H1 (cell line): ENCODE measurements at regions of chr11 and their contacts with region 1.

Region 1: DNA sequence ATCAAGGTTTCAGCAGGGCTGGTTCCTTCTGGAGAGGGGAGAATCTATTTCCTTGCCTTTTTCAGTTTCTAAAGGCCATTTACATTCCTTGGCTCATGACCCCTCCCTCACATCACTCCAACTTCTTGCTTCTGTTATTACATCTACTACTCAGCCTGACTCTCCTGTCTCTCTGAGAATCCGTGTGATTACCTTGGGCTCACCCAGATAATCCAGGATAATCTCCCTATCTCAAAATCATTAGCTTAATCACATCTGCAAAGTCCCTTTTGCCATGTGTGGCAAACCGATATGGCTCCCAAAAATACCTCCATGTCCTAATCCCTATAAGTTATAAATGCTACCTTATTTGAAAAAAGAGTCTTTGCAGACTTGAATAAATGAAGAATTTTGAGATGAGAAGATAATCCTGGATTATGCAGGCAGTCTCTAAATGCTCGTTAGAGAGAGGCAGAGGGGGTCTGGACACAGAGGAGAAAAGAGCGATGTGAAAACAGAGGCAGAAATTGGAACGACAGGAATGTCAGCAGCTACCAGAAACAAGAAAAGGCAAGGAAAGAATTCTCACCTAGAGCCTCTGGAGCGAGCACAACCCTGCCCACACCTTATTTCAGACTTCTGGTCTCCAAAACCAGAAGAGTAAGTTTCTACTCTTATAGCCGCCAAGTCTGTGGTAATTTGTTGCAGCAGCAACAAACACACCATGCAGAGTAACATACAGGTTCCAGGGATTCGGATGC is 23.6 kb upstream of the ARHGAP32 start:
- DNase-seq: peak in 1 of 2 experiments; percentile 23
- H3K4me3 ChIP-seq: no peak overlapping the region
- H3K27ac ChIP-seq: no peak overlapping the region
- H3K4me1 ChIP-seq: peaks cover 7 to 29% (median 23%) of the 10 kb centered on the region in 4 experiments; a peak in 6 of 7 replicates
- H3K27me3 ChIP-seq: no peaks in the 10 kb centered on the region
- CTCF ChIP-seq: no peak
- EP300 ChIP-seq: no peak
- POLR2A ChIP-seq: no peak
- RAD21 ChIP-seq: no peak; a peak in 1 of 4 replicates

Region 2: GRCh38 chr11:129195682-129196081 is 20.0 kb before region 1 on chr11:
- CTCF ChIA-PET with region 1: no interaction called
- POLR2A ChIA-PET with region 1: no interaction called
- DNase-seq: no peak
- H3K4me3 ChIP-seq: no peak overlapping the region
- H3K27ac ChIP-seq: no peak overlapping the region
- H3K4me1 ChIP-seq: peaks cover 0 to 7% (median 4%) of the 10 kb centered on the region in 4 experiments; a peak in 5 of 7 replicates
- H3K27me3 ChIP-seq: no peaks in the 10 kb centered on the region
- CTCF ChIP-seq: no peak
- EP300 ChIP-seq: no peak
- POLR2A ChIP-seq: no peak
- RAD21 ChIP-seq: no peak

Region 3: DNA sequence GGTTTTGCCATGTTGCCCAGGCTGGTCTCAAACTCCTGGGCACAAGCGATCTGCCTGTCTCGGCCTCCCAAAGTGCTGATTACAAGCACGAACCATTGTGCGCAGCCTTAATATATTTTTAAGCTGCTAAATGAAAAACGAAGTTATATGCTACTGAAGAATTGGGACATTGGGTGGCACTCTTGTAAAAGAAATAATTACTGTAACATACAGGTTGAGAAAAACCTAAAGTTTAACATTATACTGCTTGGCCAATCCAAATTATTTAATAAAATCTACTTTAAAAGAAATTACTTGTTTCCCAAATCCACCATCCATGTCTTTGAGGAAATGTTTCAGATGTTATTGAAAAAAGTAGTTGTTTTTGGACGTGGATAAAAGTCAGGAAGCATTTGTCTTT is 14.3 kb after region 1 on chr11:
- CTCF ChIA-PET with region 1: interaction called, 10 read pairs
- POLR2A ChIA-PET with region 1: no interaction called
- DNase-seq: no peak
- H3K4me3 ChIP-seq: no peak overlapping the region
- H3K27ac ChIP-seq: no peak overlapping the region
- H3K4me1 ChIP-seq: no peaks in the 10 kb centered on the region
- H3K27me3 ChIP-seq: no peaks in the 10 kb centered on the region
- CTCF ChIP-seq: no peak
- EP300 ChIP-seq: no peak
- POLR2A ChIP-seq: no peak
- RAD21 ChIP-seq: peak; percentile 22 to 23; a peak in 2 of 4 replicates

Region 4: DNA sequence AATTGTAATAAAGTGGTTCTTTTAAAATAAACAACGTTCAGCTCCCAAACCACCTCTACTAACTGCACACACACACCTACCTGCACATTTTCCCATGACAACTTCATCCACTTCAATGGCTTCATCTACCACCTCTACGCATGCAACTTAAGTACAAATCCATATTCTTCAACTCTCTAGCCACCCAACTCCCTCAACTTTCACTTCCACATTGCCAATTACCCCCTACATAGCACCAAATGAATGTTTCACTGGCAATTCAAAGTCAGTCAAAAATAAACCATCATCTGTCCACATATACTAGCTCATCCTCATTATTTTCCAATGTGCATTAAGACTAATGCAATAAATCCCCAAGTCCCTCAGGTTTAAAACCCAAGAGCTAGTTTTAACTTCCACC is 27.2 kb after region 1 on chr11:
- CTCF ChIA-PET with region 1: no interaction called
- POLR2A ChIA-PET with region 1: no interaction called
- DNase-seq: no peak
- H3K4me3 ChIP-seq: no peak overlapping the region
- H3K27ac ChIP-seq: no peak overlapping the region
- H3K4me1 ChIP-seq: no peaks in the 10 kb centered on the region; a peak in 1 of 7 replicates
- H3K27me3 ChIP-seq: no peaks in the 10 kb centered on the region
- CTCF ChIP-seq: no peak
- EP300 ChIP-seq: no peak
- POLR2A ChIP-seq: no peak
- RAD21 ChIP-seq: no peak